Activated CD4-positive, alpha-beta T cell treated with anti-CD3 and anti-CD28 coated beads for 36 hours (primary cell): ENCODE measurements at regions of chr6 and their contacts with region 1.

Region 1: DNA sequence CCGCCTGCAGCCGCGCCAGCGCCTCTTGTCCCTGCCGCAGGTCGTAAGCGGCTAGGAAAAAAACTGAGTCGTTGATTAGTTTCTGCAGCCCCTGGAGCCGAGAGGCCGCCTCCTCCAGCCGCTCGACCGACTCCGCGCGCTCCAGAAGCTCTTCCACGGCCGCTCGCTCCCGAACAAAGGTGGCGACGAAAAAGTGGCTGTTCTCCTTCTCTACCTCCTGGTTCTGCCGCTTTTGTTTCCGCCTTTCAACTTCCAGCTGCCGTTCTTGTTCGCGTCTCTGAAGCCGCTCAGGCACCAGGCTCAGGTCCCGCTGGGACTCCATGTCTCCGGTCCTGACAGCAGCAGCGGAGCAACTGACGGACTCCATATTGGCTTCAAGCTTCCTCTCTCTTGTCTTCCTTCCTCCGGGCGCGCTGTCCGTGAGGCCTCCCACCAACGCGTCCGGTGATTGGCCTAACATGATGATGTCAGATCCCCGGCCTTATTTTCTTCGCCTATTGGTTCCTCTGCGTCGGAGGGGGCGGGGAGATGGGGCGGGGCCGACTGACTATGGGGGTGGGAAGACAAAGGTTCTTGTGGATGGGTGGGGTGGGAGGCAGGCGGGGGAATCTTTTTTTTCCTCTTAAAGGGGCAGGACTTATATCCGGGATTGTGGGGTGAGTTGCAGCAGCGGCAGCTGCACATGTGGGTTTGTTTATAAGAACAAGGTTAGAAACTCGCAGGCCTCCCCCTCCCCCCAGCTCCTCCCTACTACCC is at the start of gene TBCC:
- DNase-seq: peak; percentile 97
- ATAC-seq: peak; percentile 84
- H3K4me3 Mint-ChIP-seq: peak within 1 kb of the TSS; percentile 84
- H3K27ac Mint-ChIP-seq: peak within 1 kb of the TSS; percentile 100
- H3K4me1 Mint-ChIP-seq: peaks cover 27% of the 10 kb centered on the region
- H3K27me3 Mint-ChIP-seq: no peaks in the 10 kb centered on the region
- total RNA-seq, gene TBCC: 14.7 to 15.3 TPM

Region 2: GRCh38 chr6:41941280-41942066 is 804.4 kb before region 1 on chr6 and contains the start of gene CCND3:
- CTCF ChIA-PET with region 1: no interaction called
- POLR2A ChIA-PET with region 1: no interaction called
- intact Hi-C with region 1: loop called in 1 of 2 experiments (anchors 5 kb)
- DNase-seq: peak; percentile 96
- ATAC-seq: peak; percentile 79
- H3K4me3 Mint-ChIP-seq: peak within 1 kb of the TSS; percentile 100
- H3K27ac Mint-ChIP-seq: peak within 1 kb of the TSS; percentile 96
- H3K4me1 Mint-ChIP-seq: peaks cover 63% of the 10 kb centered on the region
- H3K27me3 Mint-ChIP-seq: no peaks in the 10 kb centered on the region
- total RNA-seq, gene CCND3: 625 to 806 TPM

Region 3: GRCh38 chr6:42637681-42638080 is 108.2 kb before region 1 on chr6:
- CTCF ChIA-PET with region 1: interaction called, 10 read pairs
- POLR2A ChIA-PET with region 1: no interaction called
- intact Hi-C with region 1: no loop called
- DNase-seq: no peak
- ATAC-seq: peak; percentile 84
- H3K4me3 Mint-ChIP-seq: no peak overlapping the region
- H3K27ac Mint-ChIP-seq: peak overlapping the region; percentile 55
- H3K4me1 Mint-ChIP-seq: peaks cover 15% of the 10 kb centered on the region
- H3K27me3 Mint-ChIP-seq: no peaks in the 10 kb centered on the region

Region 4: DNA sequence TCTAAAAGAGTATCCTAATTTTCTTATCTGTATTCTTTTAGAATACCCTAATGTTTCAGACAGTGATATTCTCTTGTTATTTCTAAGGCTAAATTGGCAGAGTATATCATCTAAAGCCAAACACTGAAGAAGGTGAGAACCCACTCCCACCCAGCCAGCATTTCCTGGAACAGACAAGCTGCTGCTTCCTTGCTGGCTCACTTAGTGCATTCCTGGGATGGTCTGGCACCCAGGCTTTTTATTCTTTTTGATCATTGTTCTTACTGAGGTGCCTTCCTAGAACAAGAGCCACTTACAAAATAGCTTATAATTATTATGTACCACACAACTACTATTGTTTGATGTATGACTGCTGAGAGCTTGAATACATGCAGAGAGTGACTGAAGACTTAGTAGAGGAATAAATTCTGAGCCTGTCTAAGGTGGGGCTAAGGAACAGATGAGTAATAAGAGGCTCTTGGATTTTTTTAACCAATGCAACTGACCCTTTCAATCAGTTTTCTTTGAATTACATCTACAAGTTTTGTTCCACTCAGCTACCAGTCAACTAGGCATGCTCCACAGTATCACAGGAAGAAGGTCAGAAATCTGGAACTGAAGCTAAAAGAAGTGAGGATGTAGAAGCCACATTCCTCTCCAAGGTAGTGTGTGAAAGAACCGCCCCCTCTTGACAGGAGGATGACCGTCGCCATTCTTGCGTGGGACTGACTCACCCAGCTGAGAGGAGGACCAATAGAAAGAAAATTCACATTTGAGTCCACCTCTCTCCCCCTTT is 53.6 kb before region 1 on chr6:
- CTCF ChIA-PET with region 1: no interaction called
- POLR2A ChIA-PET with region 1: no interaction called
- intact Hi-C with region 1: no loop called
- DNase-seq: peak; percentile 26
- ATAC-seq: peak; percentile 52
- H3K4me3 Mint-ChIP-seq: no peak overlapping the region
- H3K27ac Mint-ChIP-seq: peak overlapping the region; percentile 29
- H3K4me1 Mint-ChIP-seq: peaks cover 23% of the 10 kb centered on the region
- H3K27me3 Mint-ChIP-seq: no peaks in the 10 kb centered on the region

Region 5: GRCh38 chr6:42782622-42783176 is 36.8 kb after region 1 on chr6:
- CTCF ChIA-PET with region 1: interaction called, 5 read pairs
- POLR2A ChIA-PET with region 1: interaction called, 33 read pairs
- intact Hi-C with region 1: loop called (anchors 1 kb)
- DNase-seq: peak; percentile 83
- ATAC-seq: peak; percentile 64
- H3K4me3 Mint-ChIP-seq: peak overlapping the region; percentile 81
- H3K27ac Mint-ChIP-seq: peak overlapping the region; percentile 96
- H3K4me1 Mint-ChIP-seq: peaks cover 25% of the 10 kb centered on the region
- H3K27me3 Mint-ChIP-seq: no peaks in the 10 kb centered on the region

Region 6: DNA sequence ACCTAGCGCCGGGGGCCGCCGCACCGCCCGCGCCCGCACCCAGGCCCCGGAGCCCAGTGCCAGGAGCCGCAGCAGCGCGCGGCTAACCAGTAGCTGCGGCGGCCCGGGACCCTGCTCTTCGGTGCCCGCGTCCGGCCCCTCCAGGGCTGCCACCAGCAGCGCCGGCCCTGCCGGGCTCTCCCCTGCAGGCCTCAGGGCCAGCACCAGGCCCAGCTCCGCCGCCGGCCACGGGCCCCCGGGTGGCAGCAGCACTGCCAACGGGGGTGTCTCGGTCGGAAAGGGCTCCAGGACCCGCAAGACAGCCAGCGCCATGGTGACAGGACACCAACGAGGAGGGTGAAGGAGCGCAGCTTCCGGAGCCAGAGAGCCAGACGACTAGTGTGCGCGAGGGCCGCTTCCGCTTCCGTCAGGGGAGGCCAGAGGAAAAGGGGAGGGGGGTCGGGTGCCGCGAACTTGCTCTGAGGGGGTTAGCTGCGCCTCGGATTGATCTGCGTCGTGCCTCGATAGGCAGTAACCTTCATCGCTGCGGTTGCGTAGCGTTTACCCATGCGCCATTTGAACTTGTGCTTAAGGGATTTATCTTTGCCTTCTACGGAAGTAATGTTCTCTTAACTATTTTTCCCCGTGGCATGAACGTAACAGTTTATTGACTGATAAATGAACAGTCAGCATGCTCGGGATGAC is 233.1 kb after region 1 on chr6 and contains the start of gene PEX6:
- CTCF ChIA-PET with region 1: no interaction called
- POLR2A ChIA-PET with region 1: interaction called, 4 read pairs
- intact Hi-C with region 1: loop called in 1 of 2 experiments (anchors 1 kb)
- DNase-seq: peak; percentile 98
- ATAC-seq: peak; percentile 95
- H3K4me3 Mint-ChIP-seq: peak within 1 kb of the TSS; percentile 89
- H3K27ac Mint-ChIP-seq: peak within 1 kb of the TSS; percentile 95
- H3K4me1 Mint-ChIP-seq: peaks cover 45% of the 10 kb centered on the region
- H3K27me3 Mint-ChIP-seq: no peaks in the 10 kb centered on the region
- total RNA-seq, gene PEX6: 10.7 to 14.6 TPM

Region 7: GRCh38 chr6:43059168-43060033 is 313.5 kb after region 1 on chr6 and contains the starts of genes KLC4 and MRPL2:
- CTCF ChIA-PET with region 1: no interaction called
- POLR2A ChIA-PET with region 1: no interaction called
- intact Hi-C with region 1: loop called (anchors 1 kb)
- DNase-seq: peak; percentile 99
- ATAC-seq: peak; percentile 98
- H3K4me3 Mint-ChIP-seq: peak within 1 kb of the TSS; percentile 85
- H3K27ac Mint-ChIP-seq: peak within 1 kb of the TSS; percentile 94
- H3K4me1 Mint-ChIP-seq: peaks cover 27% of the 10 kb centered on the region
- H3K27me3 Mint-ChIP-seq: no peaks in the 10 kb centered on the region
- total RNA-seq, gene KLC4: 10.0 to 10.1 TPM
- total RNA-seq, gene MRPL2: 93.9 to 110 TPM